PC-3 (cell line): ENCODE measurements at regions of chr3 and their contacts with region 1.

Region 1: DNA sequence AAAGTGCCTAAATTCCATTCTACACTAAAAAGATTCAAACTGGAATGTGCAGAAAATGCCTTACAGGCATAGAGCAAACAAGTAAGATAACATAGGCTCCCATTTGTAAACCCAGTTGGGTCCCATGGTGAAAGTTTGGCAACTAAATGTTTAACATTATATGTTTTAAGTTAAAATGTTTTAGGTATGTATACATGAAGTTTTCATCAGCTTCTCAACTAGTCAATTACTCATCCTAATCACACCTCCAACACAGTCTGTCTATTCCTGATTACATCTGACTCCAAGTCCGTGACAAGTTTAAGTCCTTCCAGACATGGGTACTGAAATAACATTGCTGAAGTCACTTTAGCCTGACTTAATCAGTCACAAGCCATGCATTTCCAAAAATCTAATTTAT is 25.0 kb downstream of the MYLK start:
- DNase-seq: no peak
- ATAC-seq: no peak
- H3K4me3 ChIP-seq: no peak overlapping the region
- H3K27ac ChIP-seq: no peak overlapping the region
- H3K4me1 ChIP-seq: no peaks in the 10 kb centered on the region
- H3K27me3 ChIP-seq: no peaks in the 10 kb centered on the region
- CTCF ChIP-seq: no peak

Region 2: GRCh38 chr3:123344175-123344906 is 514.8 kb before region 1 on chr3:
- CTCF ChIA-PET with region 1: no interaction called
- POLR2A ChIA-PET with region 1: no interaction called
- intact Hi-C with region 1: no loop called
- DNase-seq: no peak
- ATAC-seq: no peak
- H3K4me3 ChIP-seq: no peak overlapping the region
- H3K27ac ChIP-seq: no peak overlapping the region
- H3K4me1 ChIP-seq: no peaks in the 10 kb centered on the region
- H3K27me3 ChIP-seq: peaks cover 37% of the 10 kb centered on the region
- CTCF ChIP-seq: no peak

Region 3: DNA sequence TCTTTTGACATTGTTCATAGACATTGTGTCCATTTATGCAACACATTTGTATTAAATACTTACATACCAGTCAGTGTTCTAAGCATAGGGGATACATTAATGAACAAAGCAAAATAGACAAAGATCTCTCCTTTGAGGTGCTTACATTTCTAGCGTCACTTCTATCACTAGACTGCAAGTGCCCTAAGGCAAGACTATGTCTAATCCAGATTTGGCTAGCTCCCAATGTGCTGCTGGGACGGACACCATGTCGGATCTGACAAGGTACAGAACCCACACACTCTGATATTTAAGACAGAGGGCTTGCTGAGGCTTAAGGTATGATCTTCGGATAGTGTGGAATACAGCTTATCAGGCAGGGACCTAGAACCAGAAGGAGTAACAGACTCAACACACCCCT is 16.5 kb before region 1 on chr3:
- CTCF ChIA-PET with region 1: no interaction called
- POLR2A ChIA-PET with region 1: interaction called, 12 read pairs
- intact Hi-C with region 1: no loop called
- DNase-seq: no peak
- ATAC-seq: no peak
- H3K4me3 ChIP-seq: no peak overlapping the region
- H3K27ac ChIP-seq: no peak overlapping the region
- H3K4me1 ChIP-seq: no peaks in the 10 kb centered on the region
- H3K27me3 ChIP-seq: no peaks in the 10 kb centered on the region
- CTCF ChIP-seq: no peak